ENCODE measurements at regions of chr22 and their contacts with region 1.

Region 1: DNA sequence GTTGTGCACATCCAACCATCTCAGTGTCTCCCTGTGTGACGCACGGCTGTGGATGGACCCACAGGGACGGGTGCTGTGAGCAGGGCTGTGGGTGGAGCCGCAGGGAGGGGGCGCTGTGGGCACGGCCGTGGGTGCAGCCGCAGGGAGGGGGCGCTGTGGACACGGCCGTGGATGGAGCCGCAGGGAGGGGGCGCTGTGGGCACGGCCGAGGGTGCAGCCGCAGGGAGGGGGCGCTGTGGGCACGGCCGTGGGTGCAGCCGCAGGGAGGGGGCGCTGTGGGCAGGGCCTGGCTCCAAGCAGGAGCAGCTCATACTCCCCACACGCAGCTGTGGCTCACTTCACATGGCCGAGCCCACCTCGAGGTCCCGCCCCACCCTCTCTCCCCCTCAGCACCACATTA is 6.0 kb upstream of the MAPK11 start:
- DNase-seq: peak; percentile 71 to 90 (median 81)
- H3K4me3 ChIP-seq: peak overlapping the region in 9 of 59 donors; percentile 10 to 31 (median 17)
- H3K27ac ChIP-seq: peak overlapping the region in 56 of 59 donors; percentile 4 to 88 (median 72)
- H3K27me3 ChIP-seq: peaks cover 0 to 4% (median 0%) of the 10 kb centered on the region in 45 donors
- CTCF ChIP-seq: peak; percentile 13 to 99 (median 80)

Region 2: GRCh38 chr22:50306753-50307749 is 30.9 kb after region 1 on chr22 and contains the start of gene PLXNB2:
- intact Hi-C with region 1: no loop called
- DNase-seq: peak; percentile 63 to 90 (median 80)
- H3K4me3 ChIP-seq: peak within 1 kb of the TSS; percentile 48 to 92 (median 79)
- H3K27ac ChIP-seq: peak within 1 kb of the TSS; percentile 50 to 97 (median 88)
- H3K27me3 ChIP-seq: no peaks in the 10 kb centered on the region
- CTCF ChIP-seq: no peak
- total RNA-seq, gene PLXNB2: 45.2 to 131 (median 74.5) TPM

Region 3: DNA sequence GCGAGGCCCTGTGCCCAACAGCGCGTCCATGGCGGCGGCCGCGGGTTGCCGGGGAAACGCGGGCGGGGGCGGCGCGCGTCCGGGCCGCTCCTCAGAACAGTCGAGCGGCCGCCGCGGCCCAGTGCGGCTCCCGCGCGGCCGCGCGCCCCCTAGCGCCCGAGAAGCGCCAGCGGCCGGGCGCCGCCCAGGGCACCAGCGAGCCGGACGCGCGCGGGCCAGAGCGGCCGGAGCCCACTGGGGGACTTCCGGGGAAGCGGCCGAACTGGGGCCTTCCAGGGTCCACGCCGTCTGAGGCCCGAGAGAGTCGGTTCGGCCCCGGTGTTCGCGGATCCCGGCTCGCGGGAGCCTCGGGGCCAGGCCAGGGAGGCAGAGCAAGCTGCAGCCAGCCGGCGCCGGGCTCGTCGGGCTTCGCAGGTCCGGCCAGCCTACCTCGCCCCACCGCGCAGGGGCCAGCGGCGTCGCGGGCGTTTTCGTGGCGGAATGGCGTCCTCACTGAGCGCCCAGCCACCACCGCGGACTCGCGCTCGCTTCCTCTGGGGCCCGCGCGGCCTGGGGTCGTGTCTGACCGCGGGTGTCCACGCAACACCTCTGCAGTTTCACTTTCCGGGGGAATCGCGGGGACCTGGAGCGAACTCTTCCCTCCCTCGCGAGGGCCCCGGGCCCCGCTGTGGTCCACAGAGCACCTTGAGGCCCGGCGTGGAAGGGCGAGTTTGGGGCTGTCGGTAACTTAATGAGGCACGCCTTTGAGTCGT is 51.0 kb after region 1 on chr22 and contains the start of gene DENND6B:
- intact Hi-C with region 1: loop called (anchors 2 to 5 kb)
- DNase-seq: peak; percentile 61 to 86 (median 76)
- H3K4me3 ChIP-seq: peak within 1 kb of the TSS; percentile 47 to 97 (median 87)
- H3K27ac ChIP-seq: peak within 1 kb of the TSS; percentile 31 to 97 (median 93)
- H3K27me3 ChIP-seq: no peaks in the 10 kb centered on the region
- CTCF ChIP-seq: peak in 55 of 56 donors; percentile 17 to 80 (median 58)
- total RNA-seq, gene DENND6B: 12.7 to 56.5 (median 38.0) TPM

Region 4: DNA sequence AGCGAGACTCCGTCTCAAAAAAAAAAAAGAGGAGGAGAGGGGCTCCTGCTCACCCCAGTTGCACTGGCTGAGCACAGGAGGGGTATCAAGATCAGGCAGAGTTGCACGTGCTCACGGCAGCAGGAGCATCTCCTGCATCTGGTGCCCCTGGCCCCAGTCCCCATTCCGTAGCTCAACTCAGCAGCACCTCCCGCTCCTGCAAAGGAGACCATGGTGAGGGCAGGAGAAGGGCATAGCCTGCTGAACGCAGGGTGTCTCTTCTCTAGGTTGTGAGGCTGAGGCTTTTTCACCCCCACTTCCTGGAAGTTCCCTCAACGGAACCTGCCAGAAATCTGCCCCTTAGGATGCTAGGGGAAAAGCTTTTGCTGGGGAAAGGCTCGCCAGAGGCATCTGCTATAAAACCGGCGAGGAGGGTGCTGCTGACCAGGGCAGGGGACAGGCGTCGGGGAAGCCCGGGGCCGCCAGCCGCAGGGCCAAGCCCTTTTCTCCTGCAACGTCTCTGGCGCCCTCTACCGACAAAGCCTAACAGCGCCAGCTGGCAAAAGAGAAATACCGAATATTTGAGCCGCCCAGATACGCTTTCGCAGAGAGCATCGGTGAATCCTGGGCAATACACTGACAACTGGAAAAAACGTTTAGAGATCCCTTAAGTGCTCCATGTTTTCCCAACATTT is 66.0 kb after region 1 on chr22:
- intact Hi-C with region 1: loop called (anchors 2 to 5 kb)
- DNase-seq: peak; percentile 81 to 89 (median 87)
- H3K4me3 ChIP-seq: peak overlapping the region; percentile 59 to 96 (median 82)
- H3K27ac ChIP-seq: peak overlapping the region in 55 of 59 donors; percentile 12 to 92 (median 72)
- H3K27me3 ChIP-seq: no peaks in the 10 kb centered on the region
- CTCF ChIP-seq: peak; percentile 88 to 99 (median 95)

Region 5: DNA sequence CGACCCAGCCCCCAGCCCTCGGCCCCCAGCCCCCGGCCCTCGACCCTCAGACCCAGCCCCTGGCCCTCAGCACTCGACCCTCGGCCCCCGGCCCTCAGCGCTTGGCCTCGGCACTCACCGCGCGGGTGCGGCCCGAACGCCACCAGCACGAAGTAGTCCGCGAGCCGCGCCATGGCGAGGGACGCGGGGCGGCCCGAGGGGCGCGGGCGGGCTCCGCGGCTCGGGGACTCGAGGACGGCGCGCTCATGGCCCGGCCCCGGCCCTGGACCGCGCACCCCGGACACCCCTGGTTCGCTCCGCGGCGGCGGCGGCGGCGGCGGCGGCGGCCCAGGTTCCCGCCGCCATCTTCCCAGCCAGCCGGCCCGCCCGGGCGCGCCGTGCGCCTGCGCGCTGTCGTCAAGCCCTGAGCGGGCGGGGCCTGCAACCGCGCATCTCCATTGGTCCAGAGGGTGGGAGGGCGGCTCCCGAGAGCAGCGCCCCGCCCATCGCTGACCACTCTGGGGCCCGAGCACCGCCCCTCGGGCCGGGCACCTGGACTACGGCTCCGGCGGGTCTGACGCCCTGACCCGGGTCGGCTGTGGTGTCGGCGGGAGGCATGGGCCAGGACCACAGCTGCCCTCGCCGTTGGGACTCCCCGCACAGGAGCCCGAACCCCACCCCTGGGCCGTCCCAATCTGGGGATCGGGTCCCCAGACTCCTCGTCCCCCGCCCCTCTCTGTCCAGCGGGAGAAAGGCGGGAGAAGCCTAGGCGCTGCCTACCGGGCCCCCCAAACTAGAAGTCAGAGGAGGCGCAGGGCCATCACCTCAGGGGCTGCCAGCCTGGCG is 198.7 kb after region 1 on chr22 and contains the start of gene SBF1:
- intact Hi-C with region 1: loop called in 1 of 2 experiments (anchors 10 kb)
- DNase-seq: peak; percentile 84 to 96 (median 92)
- H3K4me3 ChIP-seq: peak within 1 kb of the TSS; percentile 53 to 97 (median 86)
- H3K27ac ChIP-seq: peak within 1 kb of the TSS in 56 of 59 donors; percentile 16 to 95 (median 75)
- H3K27me3 ChIP-seq: peaks cover 0 to 13% (median 0%) of the 10 kb centered on the region in 45 donors
- CTCF ChIP-seq: peak in 8 of 56 donors; percentile 8 to 32 (median 14)
- total RNA-seq, gene SBF1: 163 to 302 (median 210) TPM

Region 6: DNA sequence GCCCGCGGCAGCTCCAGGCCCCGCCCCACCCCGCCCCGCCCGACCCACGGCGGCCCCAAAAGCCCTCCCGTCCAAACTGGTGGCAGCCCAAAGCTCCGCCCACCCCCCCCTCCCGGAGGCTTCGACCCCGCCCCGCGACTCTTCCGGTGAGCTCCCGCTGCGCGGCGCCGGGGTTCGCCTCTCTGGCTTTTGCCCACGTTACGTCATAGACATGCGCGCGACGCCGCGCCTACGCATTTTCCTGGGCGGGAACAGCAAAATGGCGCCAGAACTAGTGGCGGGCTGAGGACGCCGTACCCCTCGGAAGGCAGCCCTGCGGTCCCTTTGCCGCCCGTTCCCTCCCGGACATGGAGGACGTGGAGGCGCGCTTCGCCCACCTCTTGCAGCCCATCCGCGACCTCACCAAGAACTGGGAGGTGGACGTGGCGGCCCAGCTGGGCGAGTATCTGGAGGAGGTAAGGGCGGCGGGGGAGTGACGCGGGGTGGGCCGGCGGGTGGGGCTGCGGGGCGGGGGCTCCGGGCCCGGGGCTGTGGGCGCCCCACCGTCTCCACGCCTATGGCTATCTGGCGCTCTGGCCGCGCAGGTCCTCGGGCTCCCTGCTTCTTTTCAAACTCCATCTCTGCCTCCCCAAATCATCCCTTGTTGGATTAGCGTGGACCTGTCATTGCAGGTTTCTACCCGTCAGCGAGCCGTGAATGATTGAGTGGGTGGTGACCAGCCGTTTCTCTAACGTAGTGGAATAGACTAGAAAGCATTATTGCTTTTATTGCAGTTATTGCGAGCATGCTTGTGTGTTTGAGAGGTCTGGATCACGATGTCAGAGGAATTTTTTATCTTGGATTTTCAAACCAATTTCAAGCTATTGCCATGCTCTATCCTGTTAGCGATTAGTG is 232.1 kb after region 1 on chr22 and contains the start of gene NCAPH2:
- intact Hi-C with region 1: loop called in 1 of 2 experiments (anchors 10 kb)
- DNase-seq: peak; percentile 92 to 99 (median 96)
- H3K4me3 ChIP-seq: peak within 1 kb of the TSS; percentile 72 to 100 (median 92)
- H3K27ac ChIP-seq: peak within 1 kb of the TSS; percentile 34 to 95 (median 85)
- H3K27me3 ChIP-seq: no peaks in the 10 kb centered on the region
- CTCF ChIP-seq: peak in 12 of 56 donors; percentile 2 to 32 (median 16)
- total RNA-seq, gene NCAPH2: 47.2 to 83.2 (median 61.5) TPM

Region 7: DNA sequence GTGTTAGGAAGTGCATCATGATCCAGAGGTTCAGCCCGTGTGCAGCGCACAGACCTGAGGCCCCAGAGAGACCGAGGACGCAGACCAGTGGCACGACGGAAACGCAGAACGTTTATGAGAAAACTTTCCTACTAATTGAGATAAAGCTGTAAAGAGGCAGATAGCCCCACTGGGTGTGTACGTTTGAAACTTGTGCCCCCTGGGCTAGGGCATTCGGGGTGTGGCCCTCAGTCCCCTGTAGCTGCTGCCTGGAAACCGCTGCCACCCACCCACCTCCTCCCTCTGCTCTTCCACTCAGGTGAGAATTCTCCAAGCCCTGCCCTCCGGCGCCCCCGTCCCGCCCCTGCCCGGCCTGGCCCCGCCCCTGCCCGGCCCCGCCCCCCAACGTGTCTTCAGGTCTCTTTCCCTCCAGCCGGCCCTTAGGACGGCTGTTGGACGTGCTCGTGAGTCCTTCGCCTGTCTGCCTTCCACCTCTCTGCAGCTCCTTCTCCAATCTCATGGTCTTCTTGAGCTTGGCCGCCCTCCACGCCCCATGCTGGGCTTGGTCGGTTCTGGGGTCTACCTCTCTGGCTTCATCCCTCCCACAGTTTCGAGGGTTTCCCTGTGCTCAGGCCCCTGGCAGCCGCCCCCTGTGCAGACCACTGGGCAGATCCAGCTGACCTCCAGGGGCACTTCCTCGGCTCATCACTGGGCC is 336.5 kb after region 1 on chr22:
- intact Hi-C with region 1: loop called in 1 of 2 experiments (anchors 10 kb)
- DNase-seq: no peak
- H3K4me3 ChIP-seq: no peak overlapping the region
- H3K27ac ChIP-seq: peak overlapping the region in 1 of 59 donors; percentile 68
- H3K27me3 ChIP-seq: no peaks in the 10 kb centered on the region
- CTCF ChIP-seq: no peak

Measured in dorsolateral prefrontal cortex (tissue), 120 donors.